ENCODE measurements at regions of chr4 and their contacts with region 1.

Region 1: GRCh38 chr4:184282251-184282713 is 64.6 kb upstream of the ENPP6 start:
- DNase-seq: no peak
- ATAC-seq: peak; percentile 51

Region 2: GRCh38 chr4:184028394-184029374 is 253.6 kb before region 1 on chr4:
- intact Hi-C with region 1: no loop called
- DNase-seq: no peak
- ATAC-seq: no peak

Region 3: GRCh38 chr4:184474263-184475095 is 192.2 kb after region 1 on chr4 and contains the start of gene IRF2:
- intact Hi-C with region 1: loop called (anchors 10 kb)
- DNase-seq: peak; percentile 98
- ATAC-seq: peak; percentile 91
- total RNA-seq, gene IRF2: 27.2 TPM